Thyroid gland (tissue), 4 donors: ENCODE measurements at regions of chr14 and their contacts with region 1.

Region 1: DNA sequence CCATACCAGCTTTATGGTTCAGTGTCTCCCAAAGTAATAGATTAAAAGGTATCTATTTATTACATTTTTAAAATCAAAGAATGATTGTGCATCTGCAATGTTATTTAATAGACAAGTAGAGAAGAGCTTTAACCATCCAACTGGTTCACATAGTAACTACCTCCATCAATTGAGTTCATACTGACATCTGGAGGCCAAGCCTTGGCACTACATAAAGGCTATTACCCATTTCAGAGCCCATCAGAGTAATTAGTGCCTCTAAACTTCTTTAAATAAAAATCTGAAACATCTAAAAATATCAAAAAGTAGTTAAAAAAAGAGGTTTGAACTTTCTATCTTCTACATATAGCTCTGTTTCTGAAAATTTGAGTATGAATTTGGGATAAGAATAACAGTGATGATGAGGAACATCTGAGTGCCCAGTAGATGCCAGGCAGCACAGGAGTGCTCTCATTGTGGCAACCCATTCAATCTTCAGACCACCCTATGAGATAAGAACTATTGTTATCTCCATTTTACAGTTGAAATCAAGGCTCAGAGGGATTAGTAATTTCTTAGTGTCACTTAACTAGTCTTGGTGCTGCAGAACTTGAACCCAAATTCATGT is 132.9 kb upstream of the DAAM1 start:
- DNase-seq: peak; percentile 29 to 34
- H3K4me3 ChIP-seq: no peak overlapping the region
- H3K27ac ChIP-seq: no peak overlapping the region
- H3K4me1 ChIP-seq: no peaks in the 10 kb centered on the region
- H3K27me3 ChIP-seq: no peaks in the 10 kb centered on the region
- CTCF ChIP-seq: peak; percentile 16 to 79 (median 64)
- POLR2A ChIP-seq: no peak

Region 2: GRCh38 chr14:58501214-58501816 is 554.2 kb before region 1 on chr14:
- intact Hi-C with region 1: loop called (anchors 5 kb)
- DNase-seq: no peak
- H3K4me3 ChIP-seq: no peak overlapping the region
- H3K27ac ChIP-seq: no peak overlapping the region
- H3K4me1 ChIP-seq: no peaks in the 10 kb centered on the region
- H3K27me3 ChIP-seq: no peaks in the 10 kb centered on the region
- CTCF ChIP-seq: peak; percentile 64 to 93 (median 82)
- POLR2A ChIP-seq: no peak